ENCODE measurements at regions of chr6 and their contacts with region 1.

Region 1: DNA sequence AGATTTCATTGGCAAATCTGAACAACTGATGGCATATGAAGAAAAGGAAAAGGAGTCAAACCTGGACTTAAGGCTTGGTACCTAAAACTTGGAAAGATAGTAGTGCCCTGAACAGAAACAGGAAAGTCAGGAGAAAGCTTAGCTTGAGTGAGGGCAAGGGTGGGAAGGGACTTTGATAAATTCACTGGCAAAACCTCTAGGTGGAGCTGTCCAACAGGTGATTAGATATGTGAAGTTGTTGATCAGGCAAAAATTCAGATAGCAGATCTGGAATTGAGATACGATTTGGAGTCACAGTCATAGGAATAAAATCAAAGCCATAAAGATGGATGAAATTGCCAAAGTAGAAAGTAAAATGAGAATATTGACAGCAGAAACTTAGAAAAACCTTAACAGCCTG is 16.1 kb upstream of the ZNF292 start:
- DNase-seq: no peak
- H3K4me3 ChIP-seq: no peak overlapping the region
- H3K27me3 ChIP-seq: no peaks in the 10 kb centered on the region; the same call in 1 of the 2 replicates
- CTCF ChIP-seq: peak; percentile 73

Region 2: GRCh38 chr6:87066449-87067333 is 72.5 kb before region 1 on chr6:
- CTCF ChIA-PET with region 1: interaction called, 14 read pairs
- POLR2A ChIA-PET with region 1: no interaction called
- DNase-seq: peak; percentile 8
- H3K4me3 ChIP-seq: no peak overlapping the region
- H3K27me3 ChIP-seq: peaks cover 5% of the 10 kb centered on the region; the same call in 1 of the 2 replicates
- CTCF ChIP-seq: peak; percentile 59

Region 3: GRCh38 chr6:87124074-87124473 is 15.2 kb before region 1 on chr6:
- CTCF ChIA-PET with region 1: interaction called, 10 read pairs
- POLR2A ChIA-PET with region 1: no interaction called
- DNase-seq: no peak
- H3K4me3 ChIP-seq: no peak overlapping the region
- H3K27me3 ChIP-seq: no peaks in the 10 kb centered on the region
- CTCF ChIP-seq: no peak

Region 4: GRCh38 chr6:87150406-87150805 is 11.2 kb after region 1 on chr6:
- CTCF ChIA-PET with region 1: interaction called, 19 read pairs
- POLR2A ChIA-PET with region 1: no interaction called
- DNase-seq: no peak
- H3K4me3 ChIP-seq: no peak overlapping the region
- H3K27me3 ChIP-seq: no peaks in the 10 kb centered on the region
- CTCF ChIP-seq: no peak